Caco-2 (cell line): ENCODE measurements at regions of chr17 and their contacts with region 1.

Region 1: GRCh38 chr17:48816774-48817590 is at the start of gene TTLL6:
- DNase-seq: peak; percentile 99 to 100
- H3K4me3 ChIP-seq: peak within 1 kb of the TSS; percentile 54
- H3K4me3 Mint-ChIP-seq: peak within 1 kb of the TSS; percentile 75
- H3K27ac Mint-ChIP-seq: no peak within 1 kb of the TSS
- H3K4me1 ChIP-seq: peaks cover 10% of the 10 kb centered on the region
- H3K4me1 Mint-ChIP-seq: peaks cover 8% of the 10 kb centered on the region
- H3K27me3 ChIP-seq: no peaks in the 10 kb centered on the region
- H3K27me3 Mint-ChIP-seq: peaks cover 2% of the 10 kb centered on the region
- CTCF ChIP-seq: peak in 1 of 2 experiments; percentile 17
- total RNA-seq, gene TTLL6: 0.16 and 0.81 TPM in 2 replicates

Region 2: DNA sequence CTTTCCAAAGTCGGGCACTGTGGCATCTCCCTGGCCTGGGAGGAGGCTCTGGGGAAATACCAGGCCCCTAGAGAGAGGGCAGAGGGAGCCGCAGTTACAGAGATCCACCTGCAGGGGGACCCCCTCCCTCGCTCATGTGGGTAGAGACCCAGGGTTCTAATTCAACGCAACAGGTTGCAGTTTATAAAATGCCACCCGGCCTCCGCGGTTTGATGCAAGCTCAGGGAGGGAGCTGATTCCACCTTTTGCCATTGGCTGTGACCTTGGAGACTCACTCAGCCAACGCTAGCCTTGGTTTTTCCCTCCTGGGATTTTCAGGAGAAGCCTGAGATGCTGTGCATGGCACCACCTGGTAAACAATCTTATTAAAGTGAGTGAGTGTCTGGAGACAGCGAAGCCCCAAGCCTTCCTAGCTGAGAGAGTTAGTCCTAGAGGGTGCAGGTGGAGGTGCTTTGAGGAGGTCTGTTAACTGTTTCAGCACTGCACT is 12.0 kb before region 1 on chr17:
- CTCF ChIA-PET with region 1: interaction called, 31 read pairs
- POLR2A ChIA-PET with region 1: no interaction called
- intact Hi-C with region 1: no loop called
- DNase-seq: peak; percentile 86 to 95
- H3K4me3 ChIP-seq: no peak overlapping the region
- H3K4me3 Mint-ChIP-seq: no peak overlapping the region
- H3K27ac Mint-ChIP-seq: no peak overlapping the region
- H3K4me1 ChIP-seq: peaks cover 15% of the 10 kb centered on the region
- H3K4me1 Mint-ChIP-seq: peaks cover 17% of the 10 kb centered on the region
- H3K27me3 ChIP-seq: no peaks in the 10 kb centered on the region
- H3K27me3 Mint-ChIP-seq: no peaks in the 10 kb centered on the region
- CTCF ChIP-seq: peak; percentile 100

Region 3: GRCh38 chr17:48830840-48831548 is 14.0 kb after region 1 on chr17 and contains the start of gene CALCOCO2:
- CTCF ChIA-PET with region 1: interaction called, 10 read pairs
- POLR2A ChIA-PET with region 1: interaction called, 10 read pairs
- intact Hi-C with region 1: loop called (anchors 1 kb)
- DNase-seq: peak; percentile 99 to 100
- H3K4me3 ChIP-seq: peak within 1 kb of the TSS; percentile 89
- H3K4me3 Mint-ChIP-seq: peak within 1 kb of the TSS; percentile 99
- H3K27ac Mint-ChIP-seq: peak within 1 kb of the TSS; percentile 99
- H3K4me1 ChIP-seq: peaks cover 10% of the 10 kb centered on the region
- H3K4me1 Mint-ChIP-seq: no peaks in the 10 kb centered on the region
- H3K27me3 ChIP-seq: no peaks in the 10 kb centered on the region
- H3K27me3 Mint-ChIP-seq: no peaks in the 10 kb centered on the region
- CTCF ChIP-seq: peak in 1 of 2 experiments; percentile 24
- total RNA-seq, gene CALCOCO2: 233 and 251 TPM in 2 replicates

Region 4: GRCh38 chr17:48850792-48851323 is 33.9 kb after region 1 on chr17:
- CTCF ChIA-PET with region 1: interaction called, 12 read pairs
- POLR2A ChIA-PET with region 1: no interaction called
- intact Hi-C with region 1: no loop called
- DNase-seq: no peak
- H3K4me3 ChIP-seq: no peak overlapping the region
- H3K4me3 Mint-ChIP-seq: no peak overlapping the region
- H3K27ac Mint-ChIP-seq: no peak overlapping the region
- H3K4me1 ChIP-seq: peaks cover 18% of the 10 kb centered on the region
- H3K4me1 Mint-ChIP-seq: peaks cover 10% of the 10 kb centered on the region
- H3K27me3 ChIP-seq: no peaks in the 10 kb centered on the region
- H3K27me3 Mint-ChIP-seq: no peaks in the 10 kb centered on the region
- CTCF ChIP-seq: no peak

Region 5: GRCh38 chr17:49038138-49038537 is 221.2 kb after region 1 on chr17:
- CTCF ChIA-PET with region 1: no interaction called
- POLR2A ChIA-PET with region 1: no interaction called
- intact Hi-C with region 1: no loop called
- DNase-seq: no peak
- H3K4me3 ChIP-seq: no peak overlapping the region
- H3K4me3 Mint-ChIP-seq: no peak overlapping the region
- H3K27ac Mint-ChIP-seq: no peak overlapping the region
- H3K4me1 ChIP-seq: no peaks in the 10 kb centered on the region
- H3K4me1 Mint-ChIP-seq: peaks cover 19% of the 10 kb centered on the region
- H3K27me3 ChIP-seq: no peaks in the 10 kb centered on the region
- H3K27me3 Mint-ChIP-seq: no peaks in the 10 kb centered on the region
- CTCF ChIP-seq: no peak

Region 6: GRCh38 chr17:49055181-49055927 is 238.4 kb after region 1 on chr17:
- CTCF ChIA-PET with region 1: no interaction called
- POLR2A ChIA-PET with region 1: no interaction called
- intact Hi-C with region 1: no loop called
- DNase-seq: no peak
- H3K4me3 ChIP-seq: no peak overlapping the region
- H3K4me3 Mint-ChIP-seq: peak overlapping the region; percentile 12
- H3K27ac Mint-ChIP-seq: peak overlapping the region; percentile 38
- H3K4me1 ChIP-seq: no peaks in the 10 kb centered on the region
- H3K4me1 Mint-ChIP-seq: no peaks in the 10 kb centered on the region
- H3K27me3 ChIP-seq: no peaks in the 10 kb centered on the region
- H3K27me3 Mint-ChIP-seq: no peaks in the 10 kb centered on the region
- CTCF ChIP-seq: no peak

Region 7: DNA sequence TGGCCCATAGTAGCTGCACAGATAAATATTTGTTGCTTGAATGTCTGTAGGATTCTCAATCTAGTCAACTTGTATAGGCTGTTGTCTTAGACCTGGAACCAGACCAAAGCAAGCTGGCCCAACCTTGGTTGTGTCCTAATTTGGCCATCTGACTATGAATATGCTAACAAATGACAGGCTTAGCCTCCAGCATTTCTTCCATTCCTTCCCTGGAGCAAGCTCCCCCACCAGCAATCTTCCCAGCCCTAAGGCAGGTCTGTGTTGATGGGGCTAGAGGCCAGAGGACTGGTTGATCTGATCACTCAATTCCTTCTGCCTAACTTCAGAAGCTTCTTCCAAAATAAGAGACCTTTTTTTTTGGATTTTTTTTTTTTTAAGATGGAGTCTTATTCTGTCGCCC is 423.0 kb after region 1 on chr17:
- CTCF ChIA-PET with region 1: no interaction called
- POLR2A ChIA-PET with region 1: no interaction called
- intact Hi-C with region 1: no loop called
- DNase-seq: no peak
- H3K4me3 ChIP-seq: no peak overlapping the region
- H3K4me3 Mint-ChIP-seq: no peak overlapping the region
- H3K27ac Mint-ChIP-seq: no peak overlapping the region
- H3K4me1 ChIP-seq: peaks cover 5% of the 10 kb centered on the region
- H3K4me1 Mint-ChIP-seq: no peaks in the 10 kb centered on the region
- H3K27me3 ChIP-seq: no peaks in the 10 kb centered on the region
- H3K27me3 Mint-ChIP-seq: peaks cover 3% of the 10 kb centered on the region
- CTCF ChIP-seq: no peak